ENCODE measurements at regions of chr9 and their contacts with region 1.

Region 1: GRCh38 chr9:3240656-3241268 is 285.0 kb downstream of the RFX3 start:
- DNase-seq: peak; percentile 77
- ATAC-seq: peak; percentile 98
- H3K4me3 Mint-ChIP-seq: no peak overlapping the region
- H3K27ac Mint-ChIP-seq: peak overlapping the region; percentile 12
- H3K4me1 Mint-ChIP-seq: peaks cover 12% of the 10 kb centered on the region
- H3K27me3 Mint-ChIP-seq: no peaks in the 10 kb centered on the region
- CTCF ChIP-seq: peak; percentile 56

Region 2: DNA sequence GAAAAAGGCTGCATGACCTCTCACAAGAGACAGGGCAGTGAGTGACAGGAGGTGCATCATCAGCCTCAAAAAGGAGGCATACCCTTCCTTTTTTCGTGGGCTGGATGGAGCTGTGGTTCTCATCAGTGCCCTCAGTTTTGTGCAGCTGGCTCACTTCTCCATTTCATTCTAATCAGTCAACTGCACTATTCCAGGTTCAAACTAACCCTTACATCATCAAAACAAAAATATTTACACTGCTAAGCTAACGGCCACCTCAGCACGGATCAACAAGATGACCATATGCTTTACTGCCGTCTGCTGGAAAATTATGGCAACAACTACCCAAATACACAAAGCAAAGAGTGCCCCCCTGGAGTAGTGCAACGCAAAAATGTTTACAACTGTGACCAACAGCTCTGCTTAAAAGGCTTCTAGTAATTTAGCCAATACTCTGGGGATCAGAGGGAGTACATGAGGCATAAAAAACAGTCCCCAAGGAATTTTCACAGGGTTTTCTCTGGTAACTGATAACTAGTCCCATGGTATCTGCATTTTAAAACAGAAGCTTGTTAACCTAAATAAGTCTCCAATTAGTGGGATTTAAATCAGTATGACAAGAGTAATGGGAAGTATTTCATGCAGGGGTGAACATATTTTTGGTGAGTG is 512.7 kb before region 1 on chr9:
- CTCF ChIA-PET with region 1: no interaction called
- POLR2A ChIA-PET with region 1: no interaction called
- DNase-seq: no peak
- ATAC-seq: peak; percentile 85
- H3K4me3 Mint-ChIP-seq: no peak overlapping the region
- H3K27ac Mint-ChIP-seq: 0 out of 2 replicates have a peak overlapping the region, but pooled peaks have one; percentile 24
- H3K4me1 Mint-ChIP-seq: peaks cover 16% of the 10 kb centered on the region
- H3K27me3 Mint-ChIP-seq: no peaks in the 10 kb centered on the region
- CTCF ChIP-seq: no peak

Region 3: GRCh38 chr9:3224931-3225330 is 15.8 kb before region 1 on chr9:
- CTCF ChIA-PET with region 1: interaction called, 10 read pairs
- POLR2A ChIA-PET with region 1: no interaction called
- DNase-seq: no peak
- ATAC-seq: no peak
- H3K4me3 Mint-ChIP-seq: no peak overlapping the region
- H3K27ac Mint-ChIP-seq: peak overlapping the region; percentile 70
- H3K4me1 Mint-ChIP-seq: peaks cover 10% of the 10 kb centered on the region
- H3K27me3 Mint-ChIP-seq: no peaks in the 10 kb centered on the region
- CTCF ChIP-seq: no peak

Measured in WTC11 (cell line).